ENCODE measurements at regions of chr18 and their contacts with region 1.

Region 1: DNA sequence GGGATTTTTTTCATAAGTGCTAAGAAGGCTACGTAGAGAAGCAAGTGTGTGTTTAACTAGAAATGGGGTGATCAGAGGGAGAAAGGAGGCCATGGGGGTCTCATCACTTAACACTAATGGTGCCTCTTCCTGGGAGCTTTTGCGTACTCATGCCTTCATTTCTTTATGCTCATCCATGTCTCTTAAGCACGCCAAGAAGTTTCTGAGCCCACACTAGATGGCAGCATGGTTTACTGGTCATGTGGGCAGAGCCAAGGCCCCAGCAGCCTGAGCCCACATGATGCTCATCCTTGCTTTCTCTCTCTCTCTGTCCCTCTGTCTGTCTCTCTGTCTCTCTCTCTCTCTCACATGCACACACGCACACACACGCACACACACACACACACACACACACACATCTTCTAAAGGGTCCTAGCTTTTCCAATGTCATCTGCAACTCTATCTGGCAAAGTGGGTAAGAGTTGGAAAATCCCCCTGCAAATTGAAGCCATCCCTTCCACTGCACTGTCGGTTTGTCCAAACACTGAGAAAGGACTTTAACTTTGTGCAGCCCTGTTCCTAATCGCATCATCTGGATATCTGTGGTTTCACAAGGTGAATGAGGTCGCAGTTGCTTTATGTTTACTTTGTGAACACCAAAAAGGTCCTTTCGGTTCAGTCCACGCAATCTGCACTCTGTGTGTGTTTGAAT is 137.1 kb upstream of the CCDC68 start:
- DNase-seq: peak in 1 of 2 donors; percentile 16
- ATAC-seq: peak in 7 of 8 donors; percentile 38 to 89 (median 86)
- H3K4me3 ChIP-seq: no peak overlapping the region
- H3K27ac ChIP-seq: peak overlapping the region in 1 of 10 donors; percentile 30
- H3K4me1 ChIP-seq: peaks cover 0 to 17% (median 8%) of the 10 kb centered on the region in 9 donors
- H3K27me3 ChIP-seq: no peaks in the 10 kb centered on the region
- CTCF ChIP-seq: peak in 8 of 9 donors; percentile 11 to 62 (median 42)

Region 2: GRCh38 chr18:55001394-55002024 is 94.9 kb before region 1 on chr18:
- intact Hi-C with region 1: no loop called
- DNase-seq: no peak
- ATAC-seq: no peak
- H3K4me3 ChIP-seq: no peak overlapping the region
- H3K27ac ChIP-seq: no peak overlapping the region
- H3K4me1 ChIP-seq: no peaks in the 10 kb centered on the region
- H3K27me3 ChIP-seq: no peaks in the 10 kb centered on the region
- CTCF ChIP-seq: no peak

Region 3: GRCh38 chr18:55214969-55215368 is 118.6 kb after region 1 on chr18:
- intact Hi-C with region 1: loop called in 2 of 10 experiments (anchors 2 to 10 kb)
- DNase-seq: no peak
- ATAC-seq: no peak
- H3K4me3 ChIP-seq: no peak overlapping the region
- H3K27ac ChIP-seq: no peak overlapping the region
- H3K4me1 ChIP-seq: peaks cover 0 to 10% (median 3%) of the 10 kb centered on the region in 9 donors
- H3K27me3 ChIP-seq: no peaks in the 10 kb centered on the region
- CTCF ChIP-seq: no peak

Region 4: DNA sequence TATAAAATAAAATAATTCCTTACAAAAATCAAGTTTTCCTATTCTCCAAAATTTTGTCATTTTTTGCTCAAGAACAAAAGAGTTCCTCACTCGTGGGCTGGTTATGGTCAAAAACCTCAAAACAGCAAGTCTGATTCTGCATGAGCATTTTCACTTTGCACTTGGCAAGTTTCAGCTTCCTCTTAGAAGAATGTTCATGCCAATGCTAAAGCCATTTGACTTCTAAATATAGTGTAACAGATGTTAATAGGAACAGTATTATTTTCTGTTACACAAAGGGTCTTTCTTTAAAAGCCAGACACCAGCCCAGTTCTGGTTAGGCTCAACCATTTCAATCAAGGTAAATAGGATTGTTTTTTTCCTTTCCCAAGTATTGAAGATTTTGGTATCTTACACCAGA is 124.1 kb after region 1 on chr18:
- intact Hi-C with region 1: loop called in 3 of 10 experiments (anchors 2 to 10 kb)
- DNase-seq: no peak
- ATAC-seq: peak in 6 of 8 donors; percentile 52 to 79 (median 66)
- H3K4me3 ChIP-seq: no peak overlapping the region
- H3K27ac ChIP-seq: peak overlapping the region in 5 of 10 donors; percentile 10 to 74 (median 45)
- H3K4me1 ChIP-seq: peaks cover 0 to 31% (median 12%) of the 10 kb centered on the region in 9 donors
- H3K27me3 ChIP-seq: no peaks in the 10 kb centered on the region
- CTCF ChIP-seq: no peak

Region 5: DNA sequence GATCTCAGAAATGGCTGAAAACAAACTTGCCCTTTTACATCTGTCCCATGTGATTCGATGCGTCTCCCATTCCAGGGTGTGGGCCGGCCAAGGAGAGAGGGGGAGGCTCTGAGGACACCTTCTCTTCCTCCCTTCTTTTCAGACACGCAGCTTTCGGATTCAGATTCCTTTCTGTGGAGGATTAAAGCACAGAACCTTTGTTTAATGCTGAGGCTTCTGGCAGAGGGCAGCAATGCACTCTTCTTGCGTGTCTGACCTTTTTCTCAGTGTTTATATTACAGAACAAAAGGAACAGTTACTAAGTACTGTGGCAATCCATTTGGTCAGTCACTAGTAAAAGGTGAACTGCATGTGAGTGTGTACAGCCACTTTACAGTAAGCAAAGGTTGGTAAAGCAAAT is 131.8 kb after region 1 on chr18:
- intact Hi-C with region 1: loop called in 2 of 10 experiments (anchors 5 kb)
- DNase-seq: no peak
- ATAC-seq: peak in 6 of 8 donors; percentile 32 to 59 (median 52)
- H3K4me3 ChIP-seq: no peak overlapping the region
- H3K27ac ChIP-seq: peak overlapping the region in 5 of 10 donors; percentile 16 to 54 (median 26)
- H3K4me1 ChIP-seq: peaks cover 0 to 30% (median 7%) of the 10 kb centered on the region in 9 donors
- H3K27me3 ChIP-seq: no peaks in the 10 kb centered on the region
- CTCF ChIP-seq: peak in 1 of 9 donors; percentile 10

Region 6: DNA sequence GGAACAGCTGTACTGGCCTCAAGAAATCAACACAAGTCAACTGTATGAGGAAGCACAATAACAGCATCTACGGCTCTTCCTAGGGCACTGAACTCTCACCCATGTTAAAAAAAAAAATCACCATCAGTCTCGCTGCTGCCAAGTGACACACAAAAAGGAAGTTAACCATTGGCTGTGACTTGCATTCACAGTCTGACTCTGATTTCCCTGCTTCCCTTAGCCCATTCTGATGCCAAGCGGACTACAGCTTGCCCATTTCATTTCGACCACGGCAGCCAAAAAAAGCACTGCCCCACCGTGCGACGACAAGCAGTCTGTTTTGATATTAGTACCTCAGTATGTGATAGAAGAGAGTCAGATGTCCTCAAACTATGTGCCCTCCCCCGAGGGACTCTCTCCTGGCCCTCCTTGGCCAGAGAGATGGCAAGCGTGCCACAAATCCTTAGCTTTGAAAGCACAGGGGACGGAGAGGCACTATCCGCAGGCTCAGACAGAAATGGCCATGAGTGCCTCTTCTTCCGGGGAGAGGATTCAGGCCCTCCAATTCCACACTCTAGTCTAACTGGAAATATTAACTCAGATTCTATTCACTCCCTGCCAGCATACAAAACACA is 241.6 kb after region 1 on chr18:
- intact Hi-C with region 1: loop called in 1 of 10 experiments (anchors 10 kb)
- DNase-seq: peak; percentile 34 to 53
- ATAC-seq: peak; percentile 70 to 88 (median 80)
- H3K4me3 ChIP-seq: peak overlapping the region in 7 of 10 donors; percentile 9 to 39 (median 14)
- H3K27ac ChIP-seq: peak overlapping the region; percentile 18 to 91 (median 80)
- H3K4me1 ChIP-seq: peaks cover 2 to 76% (median 56%) of the 10 kb centered on the region in 9 donors
- H3K27me3 ChIP-seq: no peaks in the 10 kb centered on the region
- CTCF ChIP-seq: no peak